ENCODE measurements at regions of chr3 and their contacts with region 1.

Region 1: GRCh38 chr3:150408221-150409102 is at the start of gene TSC22D2:
- DNase-seq: peak; percentile 96 to 99
- ATAC-seq: peak; percentile 94
- H3K4me3 ChIP-seq: peak within 1 kb of the TSS; percentile 78 to 84
- H3K27ac ChIP-seq: peak within 1 kb of the TSS; percentile 96 to 100
- H3K4me1 ChIP-seq: no peaks in the 10 kb centered on the region
- H3K27me3 ChIP-seq: no peaks in the 10 kb centered on the region
- total RNA-seq, gene TSC22D2: 43.9 to 64.7 TPM

Region 2: DNA sequence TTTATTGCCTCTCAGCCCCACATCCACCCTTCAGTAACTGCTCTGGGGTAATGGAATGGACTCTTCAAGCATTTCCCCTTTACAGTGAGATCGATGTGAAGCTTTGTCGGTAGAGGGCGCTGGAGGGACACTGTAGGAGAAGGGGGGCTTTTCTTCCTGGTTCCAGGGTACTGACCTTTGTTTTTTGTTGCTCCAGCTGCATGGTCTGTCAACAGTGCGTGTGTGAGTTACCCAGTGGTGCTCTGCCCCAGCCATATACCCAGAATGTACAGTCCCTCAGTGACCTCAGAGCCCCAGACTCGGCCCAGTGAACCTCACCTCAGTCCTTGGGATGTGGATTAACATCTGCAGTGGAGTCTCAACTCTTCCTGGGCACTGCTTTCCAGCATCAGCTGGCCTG is 180.6 kb before region 1 on chr3:
- intact Hi-C with region 1: loop called in 1 of 2 experiments (anchors 10 kb)
- DNase-seq: peak in 1 of 2 donors; percentile 64
- ATAC-seq: no peak
- H3K4me3 ChIP-seq: no peak overlapping the region
- H3K27ac ChIP-seq: no peak overlapping the region
- H3K4me1 ChIP-seq: no peaks in the 10 kb centered on the region
- H3K27me3 ChIP-seq: no peaks in the 10 kb centered on the region

Region 3: GRCh38 chr3:150286390-150287147 is 121.9 kb before region 1 on chr3:
- intact Hi-C with region 1: loop called (anchors 10 kb)
- DNase-seq: no peak
- ATAC-seq: no peak
- H3K4me3 ChIP-seq: no peak overlapping the region
- H3K27ac ChIP-seq: no peak overlapping the region
- H3K4me1 ChIP-seq: no peaks in the 10 kb centered on the region
- H3K27me3 ChIP-seq: no peaks in the 10 kb centered on the region

Region 4: DNA sequence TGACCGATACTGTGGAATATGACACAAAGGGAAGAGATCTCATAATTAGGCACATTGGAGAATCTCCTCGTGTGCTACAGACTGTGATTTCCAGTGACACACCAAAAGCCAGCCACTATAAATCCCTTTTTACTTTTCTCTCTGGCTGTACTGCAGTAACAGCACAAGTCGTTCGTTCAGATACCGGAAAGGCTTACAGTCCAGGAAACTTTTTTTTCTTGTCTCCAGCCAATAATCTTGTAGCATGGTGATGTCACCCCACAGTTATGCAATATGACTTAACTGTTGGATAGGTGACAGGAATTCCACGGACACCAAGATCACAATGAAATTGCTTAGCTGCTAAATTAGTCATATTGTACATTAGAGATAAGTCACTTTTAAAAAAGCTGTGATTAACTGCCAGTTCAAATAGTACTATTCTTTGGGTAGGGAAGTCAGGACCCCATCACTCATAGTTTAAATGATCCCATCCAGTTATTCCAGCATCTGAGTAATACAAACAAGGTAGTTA is 36.7 kb before region 1 on chr3:
- intact Hi-C with region 1: loop called (anchors 2 to 5 kb)
- DNase-seq: no peak
- ATAC-seq: peak; percentile 93
- H3K4me3 ChIP-seq: peak overlapping the region in 1 of 2 donors; percentile 34
- H3K27ac ChIP-seq: peak overlapping the region; percentile 82 to 84
- H3K4me1 ChIP-seq: no peaks in the 10 kb centered on the region
- H3K27me3 ChIP-seq: no peaks in the 10 kb centered on the region

Region 5: GRCh38 chr3:150469031-150469942 is 60.8 kb after region 1 on chr3:
- intact Hi-C with region 1: no loop called
- DNase-seq: peak in 1 of 2 donors; percentile 65
- ATAC-seq: peak; percentile 80
- H3K4me3 ChIP-seq: no peak overlapping the region
- H3K27ac ChIP-seq: peak overlapping the region; percentile 28 to 51
- H3K4me1 ChIP-seq: peaks cover 0 to 2% of the 10 kb centered on the region in 2 donors
- H3K27me3 ChIP-seq: no peaks in the 10 kb centered on the region

Region 6: GRCh38 chr3:150495563-150496168 is 87.2 kb after region 1 on chr3:
- intact Hi-C with region 1: loop called (anchors 5 kb)
- DNase-seq: no peak
- ATAC-seq: peak; percentile 66
- H3K4me3 ChIP-seq: no peak overlapping the region
- H3K27ac ChIP-seq: no peak overlapping the region
- H3K4me1 ChIP-seq: no peaks in the 10 kb centered on the region
- H3K27me3 ChIP-seq: no peaks in the 10 kb centered on the region

Measured in aorta (tissue), 5 donors.